ENCODE measurements at regions of chr18 and their contacts with region 1.

Region 1: GRCh38 chr18:74546751-74547550 is 12.7 kb downstream of the CNDP1 start:
- DNase-seq: peak in 2 of 3 donors; percentile 64 to 81
- ATAC-seq: peak; percentile 78 to 88
- H3K4me3 ChIP-seq: no peak overlapping the region
- H3K27ac ChIP-seq: peak overlapping the region; percentile 94
- H3K4me1 ChIP-seq: peaks cover 12% of the 10 kb centered on the region
- H3K27me3 ChIP-seq: no peaks in the 10 kb centered on the region

Region 2: GRCh38 chr18:74183130-74183529 is 363.8 kb before region 1 on chr18:
- intact Hi-C with region 1: loop called in 1 of 4 experiments (anchors 10 kb)
- DNase-seq: no peak
- ATAC-seq: no peak
- H3K4me3 ChIP-seq: no peak overlapping the region
- H3K27ac ChIP-seq: no peak overlapping the region
- H3K4me1 ChIP-seq: no peaks in the 10 kb centered on the region
- H3K27me3 ChIP-seq: no peaks in the 10 kb centered on the region